Mammary epithelial cell (primary cell): ENCODE measurements at regions of chr9 and their contacts with region 1.

Region 1: GRCh38 chr9:14353222-14354056 is 39.5 kb upstream of the NFIB start:
- DNase-seq: peak; percentile 61
- H3K4me3 ChIP-seq: peak overlapping the region in 2 of 3 experiments; percentile 17 to 31
- H3K27ac ChIP-seq: no peak overlapping the region
- H3K4me1 ChIP-seq: peaks cover 41% of the 10 kb centered on the region
- H3K27me3 ChIP-seq: no peaks in the 10 kb centered on the region
- CTCF ChIP-seq: peak; percentile 78 to 95

Region 2: DNA sequence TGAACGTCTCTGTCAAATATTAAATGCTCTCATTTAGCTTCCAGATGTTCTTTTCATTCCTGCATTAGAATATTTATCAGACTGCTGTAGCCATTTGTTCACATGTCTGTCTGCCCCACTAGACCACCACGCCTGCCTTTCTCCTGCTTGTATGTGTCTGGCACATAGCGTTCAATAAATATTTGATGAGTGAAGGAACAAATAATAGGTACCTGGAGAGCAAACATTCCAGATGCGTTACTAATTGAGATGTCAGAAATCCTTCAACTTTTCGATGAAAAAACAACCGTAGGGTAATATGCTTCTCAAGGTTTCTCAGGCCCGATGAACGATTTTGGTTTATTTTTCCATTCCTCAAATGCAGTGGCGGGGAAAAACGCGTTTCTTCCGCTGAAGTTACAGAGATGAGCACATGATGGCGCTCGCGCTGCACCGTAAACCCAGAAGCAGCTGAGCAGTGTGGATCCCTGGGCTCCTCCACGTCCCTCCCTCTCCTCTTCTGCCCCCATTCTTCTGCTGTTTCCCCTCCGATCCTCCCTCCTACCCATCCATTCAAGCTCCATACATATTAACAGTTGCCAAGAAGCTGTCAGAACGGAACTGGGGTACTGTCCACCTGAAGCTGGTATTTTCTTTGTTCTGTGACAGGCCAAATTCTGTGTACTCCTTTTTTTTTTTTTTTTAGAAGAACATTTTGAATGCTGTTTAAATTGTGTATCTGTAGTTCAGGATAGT is 1319.3 kb before region 1 on chr9:
- CTCF ChIA-PET with region 1: no interaction called
- dilution Hi-C with region 1: no loop called
- in situ Hi-C with region 1: no loop called
- intact Hi-C with region 1: loop called (anchors 2 kb)
- DNase-seq: peak; percentile 47
- H3K4me3 ChIP-seq: peak overlapping the region in 1 of 3 experiments; percentile 24
- H3K27ac ChIP-seq: no peak overlapping the region
- H3K4me1 ChIP-seq: no peaks in the 10 kb centered on the region
- H3K27me3 ChIP-seq: no peaks in the 10 kb centered on the region
- CTCF ChIP-seq: peak; percentile 83

Region 3: DNA sequence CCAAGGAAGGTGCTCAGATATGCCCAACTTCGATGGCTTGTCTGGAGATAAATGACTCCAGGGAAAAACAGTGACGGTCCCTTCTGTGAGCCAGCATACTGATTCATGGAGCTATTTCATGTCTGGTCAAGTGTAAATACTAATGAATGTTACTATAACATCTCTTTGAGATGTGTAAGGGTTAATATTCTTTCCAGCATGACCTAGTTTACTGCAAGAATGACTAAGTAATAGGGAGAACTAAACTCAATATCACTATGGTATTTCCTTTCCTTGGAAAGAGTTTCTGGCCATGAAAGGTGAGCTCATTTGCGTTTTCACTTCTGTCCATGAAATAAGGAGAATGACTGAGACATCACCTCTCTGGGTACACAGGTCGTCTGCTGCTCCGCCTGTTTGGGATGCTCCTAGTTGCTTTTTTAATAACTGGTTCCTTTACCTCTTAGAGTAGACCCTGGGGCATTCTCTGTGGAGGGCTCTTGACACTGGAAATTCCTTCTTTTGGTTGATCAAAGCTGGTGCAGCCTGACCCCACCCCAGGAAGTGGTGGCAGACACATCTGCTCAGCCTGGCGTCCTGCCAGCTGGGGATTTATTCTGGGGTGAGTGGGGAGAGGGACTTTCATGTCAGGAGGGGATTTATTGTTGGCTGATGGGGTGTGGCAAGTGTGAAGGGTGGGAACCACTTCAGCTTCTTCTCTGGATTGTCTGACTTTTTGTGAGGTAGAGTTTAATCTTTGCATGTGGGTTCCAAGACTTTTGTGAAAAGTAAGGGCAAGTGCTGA is 823.9 kb before region 1 on chr9:
- CTCF ChIA-PET with region 1: no interaction called
- dilution Hi-C with region 1: no loop called
- in situ Hi-C with region 1: no loop called
- intact Hi-C with region 1: loop called (anchors 5 kb)
- DNase-seq: peak; percentile 76
- H3K4me3 ChIP-seq: no peak overlapping the region
- H3K27ac ChIP-seq: no peak overlapping the region
- H3K4me1 ChIP-seq: peaks cover 18% of the 10 kb centered on the region
- H3K27me3 ChIP-seq: no peaks in the 10 kb centered on the region
- CTCF ChIP-seq: no peak

Region 4: GRCh38 chr9:13758936-13759335 is 594.5 kb before region 1 on chr9:
- CTCF ChIA-PET with region 1: no interaction called
- dilution Hi-C with region 1: no loop called
- in situ Hi-C with region 1: no loop called
- intact Hi-C with region 1: loop called (anchors 5 kb)
- DNase-seq: no peak
- H3K4me3 ChIP-seq: no peak overlapping the region
- H3K27ac ChIP-seq: no peak overlapping the region
- H3K4me1 ChIP-seq: no peaks in the 10 kb centered on the region
- H3K27me3 ChIP-seq: no peaks in the 10 kb centered on the region
- CTCF ChIP-seq: no peak

Region 5: GRCh38 chr9:14205463-14205862 is 148.0 kb before region 1 on chr9:
- CTCF ChIA-PET with region 1: no interaction called
- dilution Hi-C with region 1: no loop called
- in situ Hi-C with region 1: no loop called
- intact Hi-C with region 1: no loop called
- DNase-seq: peak; percentile 88
- H3K4me3 ChIP-seq: no peak overlapping the region
- H3K27ac ChIP-seq: peak overlapping the region; percentile 67
- H3K4me1 ChIP-seq: peaks cover 52% of the 10 kb centered on the region
- H3K27me3 ChIP-seq: no peaks in the 10 kb centered on the region
- CTCF ChIP-seq: no peak

Region 6: GRCh38 chr9:14412775-14413174 is 59.3 kb after region 1 on chr9:
- CTCF ChIA-PET with region 1: no interaction called
- dilution Hi-C with region 1: no loop called
- in situ Hi-C with region 1: no loop called
- intact Hi-C with region 1: no loop called
- DNase-seq: no peak
- H3K4me3 ChIP-seq: no peak overlapping the region
- H3K27ac ChIP-seq: no peak overlapping the region
- H3K4me1 ChIP-seq: no peaks in the 10 kb centered on the region
- H3K27me3 ChIP-seq: peaks cover 17% of the 10 kb centered on the region
- CTCF ChIP-seq: no peak

Region 7: DNA sequence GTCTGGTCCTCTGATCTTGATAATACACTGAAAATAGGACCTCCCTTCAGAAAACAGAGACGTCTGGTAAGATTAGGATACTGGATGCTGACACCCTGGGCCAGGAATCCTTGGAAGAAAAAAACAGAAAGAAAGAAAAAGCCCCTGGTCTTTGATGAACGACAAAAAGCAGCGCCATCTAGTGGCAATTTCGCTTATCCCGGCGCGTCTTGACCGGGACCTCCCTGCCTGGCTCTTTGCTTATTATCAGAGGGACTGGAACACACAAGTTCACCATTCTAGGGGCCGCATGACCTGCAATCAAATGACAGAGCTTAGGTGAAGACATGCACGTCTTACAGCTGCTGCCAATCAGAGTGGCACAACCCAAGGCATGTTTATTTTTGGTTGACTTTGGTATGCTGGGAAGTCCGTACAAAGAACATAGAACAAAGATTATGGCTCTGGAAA is 75.4 kb after region 1 on chr9:
- CTCF ChIA-PET with region 1: no interaction called
- dilution Hi-C with region 1: no loop called
- in situ Hi-C with region 1: no loop called
- intact Hi-C with region 1: loop called (anchors 5 kb)
- DNase-seq: peak; percentile 21
- H3K4me3 ChIP-seq: no peak overlapping the region
- H3K27ac ChIP-seq: no peak overlapping the region
- H3K4me1 ChIP-seq: peaks cover 7% of the 10 kb centered on the region
- H3K27me3 ChIP-seq: peaks cover 9% of the 10 kb centered on the region
- CTCF ChIP-seq: peak; percentile 70 to 80